ENCODE measurements at regions of chr10 and their contacts with region 1.

Region 1: GRCh38 chr10:36779234-36779846 is 346.1 kb upstream of the ANKRD30A start:
- DNase-seq: no peak
- H3K4me3 ChIP-seq: no peak overlapping the region
- H3K27ac ChIP-seq: no peak overlapping the region
- H3K4me1 ChIP-seq: peaks cover 0 to 3% (median 0%) of the 10 kb centered on the region in 4 donors
- H3K27me3 ChIP-seq: no peaks in the 10 kb centered on the region
- CTCF ChIP-seq: peak; percentile 75 to 83 (median 78)
- EP300 ChIP-seq: no peak
- POLR2A ChIP-seq: no peak

Region 2: GRCh38 chr10:35635576-35635975 is 1143.8 kb before region 1 on chr10:
- intact Hi-C with region 1: loop called (anchors 2 kb)
- DNase-seq: no peak
- H3K4me3 ChIP-seq: no peak overlapping the region
- H3K27ac ChIP-seq: no peak overlapping the region
- H3K4me1 ChIP-seq: peaks cover 22 to 49% (median 28%) of the 10 kb centered on the region in 4 donors
- H3K27me3 ChIP-seq: no peaks in the 10 kb centered on the region
- CTCF ChIP-seq: peak; percentile 84 to 95 (median 90)
- EP300 ChIP-seq: no peak
- POLR2A ChIP-seq: no peak

Region 3: GRCh38 chr10:36126076-36126475 is 653.3 kb before region 1 on chr10:
- intact Hi-C with region 1: no loop called
- DNase-seq: no peak
- H3K4me3 ChIP-seq: no peak overlapping the region
- H3K27ac ChIP-seq: no peak overlapping the region
- H3K4me1 ChIP-seq: no peaks in the 10 kb centered on the region
- H3K27me3 ChIP-seq: no peaks in the 10 kb centered on the region
- CTCF ChIP-seq: no peak
- EP300 ChIP-seq: no peak
- POLR2A ChIP-seq: no peak

Region 4: DNA sequence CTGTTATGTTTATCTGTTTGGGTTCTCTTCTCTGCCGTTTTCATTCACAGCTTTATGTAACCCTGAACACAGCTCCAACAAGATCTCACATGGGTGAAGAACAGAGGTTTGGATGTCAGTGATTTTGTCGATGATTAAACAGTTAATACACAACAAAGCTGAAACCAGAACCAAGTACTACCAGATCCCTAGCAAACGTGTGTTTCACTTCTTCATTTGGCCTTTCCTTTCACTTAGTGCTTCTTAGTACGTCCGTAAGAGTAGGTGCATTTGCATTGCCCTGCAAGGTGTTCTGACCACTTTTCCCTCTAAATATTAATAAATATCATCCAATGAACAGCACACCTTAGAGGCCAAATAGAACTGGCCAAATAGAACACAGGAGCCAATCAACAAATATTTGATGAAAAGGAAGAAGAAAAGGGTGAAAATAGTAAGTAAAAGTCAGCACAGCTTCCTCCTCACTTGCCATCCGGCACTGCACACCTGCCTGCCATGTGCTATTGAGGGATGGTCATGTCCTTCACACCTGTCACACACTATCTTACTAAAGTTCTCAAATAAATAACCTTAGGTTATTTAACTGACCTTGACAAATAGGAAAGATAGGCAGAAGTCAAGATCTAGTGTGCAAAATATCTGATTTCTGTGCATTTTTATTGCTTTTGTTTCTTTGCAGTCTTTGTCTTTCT is 93.5 kb after region 1 on chr10:
- intact Hi-C with region 1: loop called (anchors 10 kb)
- DNase-seq: no peak
- H3K4me3 ChIP-seq: no peak overlapping the region
- H3K27ac ChIP-seq: no peak overlapping the region
- H3K4me1 ChIP-seq: peaks cover 2 to 10% (median 5%) of the 10 kb centered on the region in 4 donors
- H3K27me3 ChIP-seq: no peaks in the 10 kb centered on the region
- CTCF ChIP-seq: no peak
- EP300 ChIP-seq: no peak
- POLR2A ChIP-seq: no peak

Measured in esophagus muscularis mucosa (tissue), 4 donors.